ENCODE measurements at regions of chr14 and their contacts with region 1.

Region 1: GRCh38 chr14:60184146-60184904 is 19.1 kb upstream of the DHRS7 start:
- DNase-seq: peak in 1 of 2 donors; percentile 88
- ATAC-seq: peak; percentile 92 to 94 (median 93)
- H3K4me3 ChIP-seq: peak overlapping the region; percentile 43
- H3K4me3 Mint-ChIP-seq: peak overlapping the region; percentile 87
- H3K27ac ChIP-seq: peak overlapping the region; percentile 85
- H3K27ac Mint-ChIP-seq: peak overlapping the region; percentile 97 to 98
- H3K4me1 ChIP-seq: peaks cover 6% of the 10 kb centered on the region
- H3K4me1 Mint-ChIP-seq: peaks cover 12 to 17% of the 10 kb centered on the region in 2 donors
- H3K27me3 ChIP-seq: no peaks in the 10 kb centered on the region
- H3K27me3 Mint-ChIP-seq: peaks cover 0 to 3% of the 10 kb centered on the region in 2 donors
- CTCF ChIP-seq: peak; percentile 98

Region 2: DNA sequence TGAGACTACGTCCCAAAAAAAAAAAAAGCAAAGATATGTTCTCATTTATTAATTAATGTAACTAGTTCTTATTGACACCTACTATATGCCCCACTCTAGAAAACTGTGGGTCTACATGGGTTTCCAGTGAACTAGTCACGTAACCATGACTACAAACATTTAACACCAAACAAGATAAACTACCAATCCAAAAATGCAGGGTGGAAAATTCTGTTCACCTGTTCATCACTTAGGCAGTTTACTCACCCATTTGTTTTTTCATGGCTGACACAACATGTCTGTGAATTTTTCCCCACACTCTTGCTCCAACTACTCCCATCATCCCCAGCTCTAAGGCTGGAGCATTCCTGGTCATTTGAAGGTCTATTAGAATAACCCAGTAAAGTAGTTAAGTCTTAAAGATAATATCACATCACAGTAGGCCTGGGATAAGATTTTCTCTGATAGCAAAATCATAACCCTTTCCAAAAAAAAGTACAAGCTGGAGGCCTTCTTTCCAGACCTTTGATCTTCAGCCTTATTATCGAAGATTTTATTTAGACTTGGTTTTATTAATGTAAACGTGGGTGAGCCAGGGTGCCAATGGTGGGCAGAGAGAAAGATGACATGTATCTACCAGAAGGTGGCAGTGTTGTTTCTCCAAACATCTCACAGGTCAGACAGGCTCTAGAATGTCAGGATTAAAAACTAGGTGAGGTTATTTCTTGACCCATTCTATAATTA is 1057.5 kb before region 1 on chr14:
- intact Hi-C with region 1: loop called (anchors 5 kb)
- DNase-seq: peak in 1 of 2 donors; percentile 78
- ATAC-seq: peak; percentile 76 to 84 (median 78)
- H3K4me3 ChIP-seq: no peak overlapping the region
- H3K4me3 Mint-ChIP-seq: no peak overlapping the region
- H3K27ac ChIP-seq: no peak overlapping the region
- H3K27ac Mint-ChIP-seq: no peak overlapping the region
- H3K4me1 ChIP-seq: no peaks in the 10 kb centered on the region
- H3K4me1 Mint-ChIP-seq: no peaks in the 10 kb centered on the region
- H3K27me3 ChIP-seq: no peaks in the 10 kb centered on the region
- H3K27me3 Mint-ChIP-seq: peaks cover 7 to 17% of the 10 kb centered on the region in 2 donors
- CTCF ChIP-seq: peak; percentile 86

Region 3: DNA sequence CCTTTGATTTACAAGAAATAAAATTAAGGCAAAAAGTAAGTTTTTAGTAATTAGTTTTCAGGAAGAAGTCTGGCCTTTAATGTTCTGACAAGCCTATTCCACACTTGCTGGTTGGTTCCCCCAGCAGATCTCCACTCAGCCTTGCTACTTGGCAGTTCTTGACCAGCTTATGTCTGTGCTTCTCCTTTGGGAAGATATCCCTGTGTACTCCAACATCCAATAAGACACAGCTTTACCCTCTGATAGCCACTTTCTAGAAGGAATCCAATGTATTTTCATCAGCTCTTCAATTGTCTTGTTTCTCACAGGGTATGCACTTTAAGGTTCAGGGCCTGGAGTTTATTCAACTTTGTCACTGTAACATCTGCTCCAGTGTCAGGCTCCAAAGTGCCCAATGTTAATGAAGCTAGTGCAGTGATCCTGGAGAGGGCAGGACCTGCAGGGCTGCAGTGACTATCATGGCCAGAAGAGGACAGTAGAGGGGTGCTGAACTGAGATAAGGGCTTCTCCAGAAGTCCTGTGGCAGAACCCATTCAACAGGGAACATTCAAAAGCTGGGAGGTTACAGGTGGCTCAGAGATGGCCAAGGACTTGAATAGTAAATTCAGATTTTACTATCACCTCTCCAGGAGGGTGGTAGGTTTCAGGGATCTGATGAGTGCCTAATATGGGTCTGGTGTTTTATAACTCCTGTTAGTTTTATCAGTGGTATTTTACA is 677.1 kb before region 1 on chr14:
- intact Hi-C with region 1: loop called (anchors 1 kb)
- DNase-seq: peak in 1 of 2 donors; percentile 62
- ATAC-seq: peak; percentile 65 to 81 (median 81)
- H3K4me3 ChIP-seq: no peak overlapping the region
- H3K4me3 Mint-ChIP-seq: no peak overlapping the region
- H3K27ac ChIP-seq: no peak overlapping the region
- H3K27ac Mint-ChIP-seq: no peak overlapping the region
- H3K4me1 ChIP-seq: no peaks in the 10 kb centered on the region
- H3K4me1 Mint-ChIP-seq: peaks cover 6 to 10% of the 10 kb centered on the region in 2 donors
- H3K27me3 ChIP-seq: no peaks in the 10 kb centered on the region
- H3K27me3 Mint-ChIP-seq: peaks cover 0 to 3% of the 10 kb centered on the region in 2 donors
- CTCF ChIP-seq: peak; percentile 65

Region 4: GRCh38 chr14:59964251-59965007 is 219.9 kb before region 1 on chr14:
- intact Hi-C with region 1: loop called (anchors 1 kb)
- DNase-seq: peak in 1 of 2 donors; percentile 29
- ATAC-seq: peak; percentile 3 to 17 (median 12)
- H3K4me3 ChIP-seq: peak overlapping the region; percentile 53
- H3K4me3 Mint-ChIP-seq: peak overlapping the region; percentile 93
- H3K27ac ChIP-seq: peak overlapping the region; percentile 75
- H3K27ac Mint-ChIP-seq: peak overlapping the region; percentile 91 to 92
- H3K4me1 ChIP-seq: peaks cover 4% of the 10 kb centered on the region
- H3K4me1 Mint-ChIP-seq: peaks cover 7 to 8% of the 10 kb centered on the region in 2 donors
- H3K27me3 ChIP-seq: no peaks in the 10 kb centered on the region
- H3K27me3 Mint-ChIP-seq: peaks cover 7 to 17% of the 10 kb centered on the region in 2 donors
- CTCF ChIP-seq: no peak

Region 5: GRCh38 chr14:60064491-60065072 is 119.7 kb before region 1 on chr14:
- intact Hi-C with region 1: loop called (anchors 1 kb)
- DNase-seq: peak in 1 of 2 donors; percentile 65
- ATAC-seq: peak; percentile 70 to 88 (median 75)
- H3K4me3 ChIP-seq: no peak overlapping the region
- H3K4me3 Mint-ChIP-seq: no peak overlapping the region
- H3K27ac ChIP-seq: no peak overlapping the region
- H3K27ac Mint-ChIP-seq: no peak overlapping the region
- H3K4me1 ChIP-seq: no peaks in the 10 kb centered on the region
- H3K4me1 Mint-ChIP-seq: no peaks in the 10 kb centered on the region
- H3K27me3 ChIP-seq: no peaks in the 10 kb centered on the region
- H3K27me3 Mint-ChIP-seq: peaks cover 4 to 6% of the 10 kb centered on the region in 2 donors
- CTCF ChIP-seq: peak; percentile 80

Region 6: DNA sequence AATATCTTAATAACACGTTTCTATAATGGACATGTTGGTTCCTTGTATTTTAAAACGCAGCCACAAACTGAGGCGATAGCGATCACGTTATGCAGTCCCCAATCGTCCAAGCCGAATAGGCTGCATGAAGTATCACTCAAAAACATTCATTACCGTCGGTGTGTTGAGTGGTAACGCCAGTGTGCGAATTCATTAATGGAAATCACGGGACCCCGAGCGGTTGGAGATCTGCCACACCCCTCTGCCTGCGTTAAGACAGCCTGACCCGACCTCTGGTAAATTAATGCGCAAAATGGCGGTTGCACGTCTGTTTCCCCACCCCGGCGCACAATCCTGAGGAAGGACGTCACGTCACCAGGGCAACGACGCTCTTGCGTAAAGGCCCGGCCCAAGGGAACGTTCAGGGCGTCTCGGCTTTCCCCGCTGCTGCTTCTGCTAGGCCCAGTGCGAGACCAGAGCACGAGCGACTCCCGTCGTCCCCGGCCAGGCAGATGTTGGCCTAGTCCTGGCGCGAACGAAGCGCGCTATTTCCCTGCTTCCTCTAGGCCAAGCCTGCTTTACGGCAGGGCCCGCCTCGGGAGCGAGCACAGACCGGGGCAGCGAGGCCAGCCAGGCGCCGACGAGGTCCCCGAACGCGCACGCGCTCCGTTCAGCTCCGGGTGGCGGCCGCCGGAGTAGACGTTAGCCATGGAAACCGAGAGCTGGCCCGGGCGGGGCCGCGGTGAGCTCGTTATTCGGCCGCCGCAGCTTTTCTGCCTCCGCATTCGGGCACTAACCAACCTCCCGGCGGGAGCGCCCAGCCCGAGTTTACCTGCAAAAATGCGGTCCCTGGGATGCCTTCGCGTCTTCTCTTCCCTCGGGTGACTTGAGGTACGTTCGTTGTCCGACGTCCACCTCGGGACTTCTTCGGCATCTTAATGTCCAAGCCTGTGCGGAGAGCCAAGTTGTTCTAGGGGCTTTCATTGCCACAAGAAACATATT is 92.5 kb before region 1 on chr14 and contains the start of gene PCNX4:
- intact Hi-C with region 1: loop called (anchors 1 kb)
- DNase-seq: peak; percentile 88 to 99
- ATAC-seq: peak; percentile 82 to 95 (median 89)
- H3K4me3 ChIP-seq: peak within 1 kb of the TSS; percentile 84
- H3K4me3 Mint-ChIP-seq: peak within 1 kb of the TSS; percentile 92
- H3K27ac ChIP-seq: peak within 1 kb of the TSS; percentile 97
- H3K27ac Mint-ChIP-seq: peak within 1 kb of the TSS; percentile 94 to 96
- H3K4me1 ChIP-seq: peaks cover 19% of the 10 kb centered on the region
- H3K4me1 Mint-ChIP-seq: peaks cover 45 to 49% of the 10 kb centered on the region in 2 donors
- H3K27me3 ChIP-seq: no peaks in the 10 kb centered on the region
- H3K27me3 Mint-ChIP-seq: peaks cover 0 to 9% of the 10 kb centered on the region in 2 donors
- CTCF ChIP-seq: no peak
- total RNA-seq, gene PCNX4: 51.7 to 78.3 (median 58.3) TPM

Region 7: GRCh38 chr14:60164712-60165546 is 19.4 kb before region 1 on chr14 and contains the start of gene DHRS7:
- intact Hi-C with region 1: loop called (anchors 1 kb)
- DNase-seq: peak; percentile 72 to 85
- ATAC-seq: peak; percentile 80 to 95 (median 89)
- H3K4me3 ChIP-seq: peak within 1 kb of the TSS; percentile 98
- H3K4me3 Mint-ChIP-seq: peak within 1 kb of the TSS; percentile 96
- H3K27ac ChIP-seq: peak within 1 kb of the TSS; percentile 98
- H3K27ac Mint-ChIP-seq: peak within 1 kb of the TSS; percentile 98
- H3K4me1 ChIP-seq: peaks cover 37% of the 10 kb centered on the region
- H3K4me1 Mint-ChIP-seq: peaks cover 51 to 53% of the 10 kb centered on the region in 2 donors
- H3K27me3 ChIP-seq: no peaks in the 10 kb centered on the region
- H3K27me3 Mint-ChIP-seq: no peaks in the 10 kb centered on the region
- CTCF ChIP-seq: peak; percentile 11
- total RNA-seq, gene DHRS7: 115 to 139 (median 126) TPM

Measured in natural killer cell (primary cell).